ENCODE measurements at regions of chr17 and their contacts with region 1.

Region 1: DNA sequence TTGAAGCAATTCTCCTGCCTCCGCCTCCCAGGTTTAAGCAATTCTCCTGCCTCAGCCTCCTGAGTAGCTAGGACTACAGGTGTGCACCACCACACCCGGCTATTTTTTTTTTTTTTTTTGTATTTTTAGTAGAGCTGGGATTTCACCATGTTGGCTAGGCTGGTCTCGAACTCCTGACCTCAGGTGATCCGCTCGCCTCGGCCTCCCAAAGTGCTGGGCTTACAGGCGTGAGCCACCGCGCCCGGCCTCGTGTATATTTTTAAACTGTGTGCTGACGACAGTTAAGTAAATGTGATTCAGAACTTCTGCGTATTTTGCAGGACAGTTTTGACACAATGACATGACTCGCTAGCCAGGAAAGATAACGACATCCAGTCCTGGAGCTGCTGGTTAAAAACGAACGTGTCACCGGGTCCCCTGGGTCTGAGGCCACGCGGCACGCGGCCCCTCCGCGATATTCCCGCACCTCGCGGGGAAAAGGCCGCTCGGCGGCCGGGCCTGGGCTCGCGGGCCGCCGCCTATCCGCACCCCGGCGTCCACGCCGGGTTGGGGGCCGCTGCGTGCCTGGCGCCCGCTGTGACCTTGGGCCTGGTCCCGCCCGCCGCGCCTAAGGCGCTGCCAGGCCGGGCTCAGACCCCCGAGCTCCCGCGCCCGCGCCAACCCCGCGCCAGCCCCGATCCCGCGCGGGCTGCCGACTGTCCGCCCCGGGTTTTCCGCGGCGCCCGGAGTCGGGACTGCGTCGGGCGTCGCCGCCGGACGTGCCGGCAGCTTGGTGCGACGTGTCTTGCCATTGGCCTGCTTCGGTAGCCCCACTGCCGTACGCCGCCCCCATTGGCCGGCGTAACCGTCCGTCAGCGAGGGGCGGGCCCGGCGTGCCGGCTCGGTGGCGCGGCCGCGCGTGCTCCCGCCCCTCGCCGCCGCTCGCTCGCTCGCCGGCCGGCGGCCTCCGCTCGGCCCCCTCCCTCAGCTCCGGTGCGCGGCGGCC is at the start of gene FOXK2:
- DNase-seq: peak; percentile 80 to 95
- H3K4me3 ChIP-seq: peak within 1 kb of the TSS; percentile 81 to 84
- H3K27ac ChIP-seq: peak within 1 kb of the TSS; percentile 88 to 99
- H3K4me1 ChIP-seq: peaks cover 0 to 8% of the 10 kb centered on the region in 2 donors
- H3K27me3 ChIP-seq: no peaks in the 10 kb centered on the region
- CTCF ChIP-seq: no peak
- total RNA-seq, gene FOXK2: 131 TPM

Region 2: DNA sequence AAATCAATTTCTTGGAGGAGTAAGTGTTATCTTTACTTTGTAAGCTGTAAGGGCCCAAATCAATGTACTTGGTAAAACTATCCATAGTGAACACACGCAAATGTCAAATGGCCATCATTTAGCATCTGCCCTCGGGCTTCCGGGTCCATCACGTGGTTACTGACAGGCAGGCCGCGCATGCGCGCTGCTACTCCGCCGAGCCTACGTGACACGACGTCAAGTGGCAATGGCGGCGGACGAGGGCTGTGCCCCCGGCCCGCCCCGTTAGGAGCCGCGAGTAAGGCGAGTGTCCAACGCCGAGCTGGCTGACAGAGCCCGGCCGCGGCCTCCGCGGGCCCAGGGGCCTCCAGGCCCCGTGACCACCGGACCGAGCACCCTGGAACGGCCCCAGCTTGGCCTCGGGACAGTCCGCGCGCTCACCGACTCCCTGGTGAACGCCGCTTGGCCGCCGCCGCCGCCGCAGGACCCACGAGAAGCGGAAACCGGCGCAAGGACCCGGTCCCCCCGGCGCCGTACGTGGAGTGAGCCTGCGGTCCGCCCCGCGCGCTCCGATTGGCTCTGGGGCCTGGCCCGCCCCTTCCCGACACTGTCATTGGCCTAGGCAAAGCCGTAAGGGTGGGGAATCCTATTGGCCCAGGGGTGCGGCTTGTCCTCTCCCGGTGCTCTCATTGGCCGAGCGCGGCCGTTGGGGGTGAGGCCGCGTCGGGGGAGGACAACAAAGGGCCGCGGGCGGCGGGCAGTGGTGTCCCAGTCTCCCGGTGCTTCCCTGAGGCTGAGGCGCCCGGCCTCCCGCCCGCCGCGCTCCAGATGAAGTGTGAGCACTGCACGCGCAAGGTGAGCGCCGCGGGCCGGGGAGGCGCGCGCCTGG is 60.9 kb before region 1 on chr17 and contains the start of gene NARF:
- intact Hi-C with region 1: loop called (anchors 1 kb)
- DNase-seq: peak; percentile 92 to 99
- H3K4me3 ChIP-seq: peak within 1 kb of the TSS; percentile 77 to 86
- H3K27ac ChIP-seq: peak within 1 kb of the TSS; percentile 100
- H3K4me1 ChIP-seq: peaks cover 0 to 12% of the 10 kb centered on the region in 2 donors
- H3K27me3 ChIP-seq: no peaks in the 10 kb centered on the region
- CTCF ChIP-seq: no peak
- total RNA-seq, gene NARF: 38.3 TPM

Region 3: DNA sequence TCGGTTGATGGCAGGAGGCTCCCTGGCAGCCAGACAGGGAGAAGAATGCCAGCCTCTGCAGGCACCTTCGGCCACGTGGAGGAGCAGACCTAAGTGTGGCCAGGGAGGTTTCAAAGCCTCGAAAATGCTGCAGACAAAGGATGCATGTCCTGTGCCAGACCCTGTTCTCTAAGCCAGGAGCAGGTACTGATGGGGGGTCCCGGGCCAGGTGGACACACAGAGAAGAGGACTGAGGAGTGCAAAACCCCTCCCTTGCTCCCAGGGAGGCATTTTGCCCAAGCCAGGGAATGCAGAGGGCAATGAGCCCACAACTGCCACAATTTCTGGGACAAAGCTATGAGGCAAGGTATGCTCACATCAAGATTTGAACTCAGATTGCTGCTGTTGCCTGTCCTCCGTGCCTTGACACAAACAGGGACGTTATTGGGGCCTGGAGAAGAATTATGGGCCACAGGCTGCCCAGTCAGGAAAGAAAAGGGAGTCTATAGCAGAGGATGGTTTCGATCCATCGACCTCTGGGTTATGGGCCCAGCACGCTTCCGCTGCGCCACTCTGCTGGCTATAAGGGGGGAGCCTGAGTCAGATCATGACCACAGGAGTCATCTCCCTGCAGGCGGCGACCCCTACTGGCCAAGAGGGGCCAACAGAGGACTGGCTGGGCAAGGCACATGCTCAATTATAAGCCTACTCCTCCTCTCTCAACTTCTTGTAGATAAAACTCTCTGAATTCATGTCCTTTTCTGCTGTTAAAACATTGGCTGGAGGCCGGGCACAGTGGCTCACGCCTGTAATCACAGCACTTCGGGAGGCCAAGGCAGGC is 24.7 kb before region 1 on chr17:
- intact Hi-C with region 1: loop called (anchors 1 kb)
- DNase-seq: peak; percentile 84 to 96
- H3K4me3 ChIP-seq: no peak overlapping the region
- H3K27ac ChIP-seq: peak overlapping the region; percentile 90 to 91
- H3K4me1 ChIP-seq: peaks cover 6 to 28% of the 10 kb centered on the region in 2 donors
- H3K27me3 ChIP-seq: no peaks in the 10 kb centered on the region
- CTCF ChIP-seq: peak; percentile 81 to 95 (median 87)

Region 4: GRCh38 chr17:82505296-82505695 is 13.8 kb before region 1 on chr17:
- intact Hi-C with region 1: no loop called
- DNase-seq: no peak
- H3K4me3 ChIP-seq: no peak overlapping the region
- H3K27ac ChIP-seq: no peak overlapping the region
- H3K4me1 ChIP-seq: no peaks in the 10 kb centered on the region
- H3K27me3 ChIP-seq: no peaks in the 10 kb centered on the region
- CTCF ChIP-seq: no peak

Region 5: GRCh38 chr17:82536512-82537201 is 17.5 kb after region 1 on chr17:
- intact Hi-C with region 1: loop called (anchors 2 kb)
- DNase-seq: peak in 1 of 2 donors; percentile 76
- H3K4me3 ChIP-seq: peak overlapping the region; percentile 37 to 43
- H3K27ac ChIP-seq: peak overlapping the region; percentile 93 to 95
- H3K4me1 ChIP-seq: peaks cover 4 to 57% of the 10 kb centered on the region in 2 donors
- H3K27me3 ChIP-seq: no peaks in the 10 kb centered on the region
- CTCF ChIP-seq: no peak

Region 6: GRCh38 chr17:82592767-82593589 is 73.9 kb after region 1 on chr17:
- intact Hi-C with region 1: loop called (anchors 5 kb)
- DNase-seq: peak; percentile 63 to 91
- H3K4me3 ChIP-seq: peak overlapping the region; percentile 77 to 79
- H3K27ac ChIP-seq: peak overlapping the region; percentile 89 to 94
- H3K4me1 ChIP-seq: peaks cover 5 to 32% of the 10 kb centered on the region in 2 donors
- H3K27me3 ChIP-seq: no peaks in the 10 kb centered on the region
- CTCF ChIP-seq: no peak